Activated T-helper 1 cell treated with anti-CD3 and anti-CD28 coated beads, Interleukin-12 subunit alpha, Interleukin-12 subunit beta, Interleukin-2, Interleukin-4 antibody, amounts not matched to agents 30 ng/mL and 10 ng/mL and 1 ng/mL, durations not matched to agents 14 hours and 24 hours and 36 hours (primary cell): ENCODE measurements at regions of chr14 and their contacts with region 1.

Region 1: DNA sequence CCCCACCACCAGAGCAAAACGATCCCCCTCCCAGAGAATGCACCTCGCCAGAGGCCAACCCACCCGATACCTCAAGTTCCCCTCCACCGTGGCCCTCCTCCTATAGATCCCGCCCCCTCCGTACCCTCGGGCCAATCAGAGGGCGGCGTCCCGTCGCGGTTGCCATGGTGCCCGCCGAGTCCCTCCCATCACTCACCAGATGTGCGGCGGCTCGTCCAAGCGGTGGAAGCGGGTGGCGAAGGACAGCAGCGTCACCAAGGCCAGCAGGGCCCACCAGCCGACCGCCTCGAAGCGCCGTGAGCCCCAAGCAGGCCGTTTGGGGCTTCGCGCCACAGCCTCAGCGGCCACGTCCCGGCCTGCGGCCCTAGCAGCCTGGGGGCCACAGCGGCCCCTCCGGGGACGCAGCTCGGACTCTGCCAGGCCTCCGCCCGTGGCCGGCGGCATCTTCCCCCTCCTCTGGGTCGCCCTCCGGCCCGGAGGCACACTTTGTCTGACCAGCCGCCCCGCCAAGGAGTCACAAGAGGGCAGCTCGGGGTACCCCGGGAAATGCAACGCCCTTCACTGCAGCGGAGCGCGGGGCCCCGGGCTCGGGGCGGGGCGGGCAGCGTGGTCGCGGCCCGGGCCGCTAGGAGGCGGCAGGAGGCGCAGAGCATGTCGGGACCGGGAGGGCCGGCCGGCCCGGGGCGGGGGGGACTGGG is at the start of gene POMT2:
- DNase-seq: peak; percentile 92
- H3K4me3 Mint-ChIP-seq: peak within 1 kb of the TSS; percentile 92
- H3K27ac Mint-ChIP-seq: peak within 1 kb of the TSS; percentile 99
- H3K4me1 Mint-ChIP-seq: peaks cover 22% of the 10 kb centered on the region
- H3K27me3 Mint-ChIP-seq: no peaks in the 10 kb centered on the region
- total RNA-seq, gene POMT2: 20.5 and 22.1 TPM in 2 replicates

Region 2: GRCh38 chr14:77033622-77034521 is 286.5 kb before region 1 on chr14:
- intact Hi-C with region 1: loop called (anchors 2 kb)
- DNase-seq: peak; percentile 80
- H3K4me3 Mint-ChIP-seq: peak overlapping the region; percentile 87
- H3K27ac Mint-ChIP-seq: peak overlapping the region; percentile 98
- H3K4me1 Mint-ChIP-seq: peaks cover 79% of the 10 kb centered on the region
- H3K27me3 Mint-ChIP-seq: no peaks in the 10 kb centered on the region

Region 3: GRCh38 chr14:77339407-77339806 is 19.0 kb after region 1 on chr14:
- intact Hi-C with region 1: no loop called
- DNase-seq: no peak
- H3K4me3 Mint-ChIP-seq: no peak overlapping the region
- H3K27ac Mint-ChIP-seq: no peak overlapping the region
- H3K4me1 Mint-ChIP-seq: peaks cover 18% of the 10 kb centered on the region
- H3K27me3 Mint-ChIP-seq: no peaks in the 10 kb centered on the region

Region 4: DNA sequence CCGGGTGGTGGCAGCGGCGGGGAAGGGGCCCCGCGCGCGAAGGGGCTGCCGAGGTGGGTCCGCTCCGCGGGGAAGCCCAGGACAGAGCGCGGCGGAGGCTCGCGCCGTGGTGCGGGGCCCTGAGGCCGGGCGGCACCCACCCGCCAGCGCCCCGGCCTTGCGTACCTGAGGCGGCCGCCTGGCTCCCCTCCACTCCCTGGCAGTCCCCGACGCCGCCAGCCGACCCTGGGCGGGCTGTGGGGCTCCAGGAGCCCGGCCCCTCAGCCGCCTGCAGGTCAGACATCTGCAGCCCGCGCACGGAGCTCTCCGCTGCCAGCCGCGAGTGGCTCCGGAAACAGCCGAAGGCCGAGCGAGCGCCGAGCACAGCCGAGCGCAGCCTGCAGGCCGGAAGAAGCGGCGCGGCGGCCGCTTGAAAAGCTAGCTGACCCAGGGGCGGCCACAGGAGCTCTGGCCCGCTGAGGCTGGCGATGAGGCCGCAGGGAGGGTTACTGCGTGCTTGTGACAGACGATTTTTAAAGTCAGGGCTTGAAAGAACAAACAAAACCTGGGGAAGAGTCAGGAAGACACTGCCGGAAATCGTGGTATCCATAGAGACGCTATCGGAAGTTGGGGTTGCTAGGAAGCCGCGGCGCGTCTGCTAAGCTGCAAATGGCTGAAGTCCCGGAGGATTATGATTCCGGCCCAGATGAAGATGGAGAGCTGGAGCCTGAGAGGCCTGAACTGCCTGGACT is 56.5 kb after region 1 on chr14 and contains the starts of genes SAMD15 and TMED8:
- intact Hi-C with region 1: loop called (anchors 1 kb)
- DNase-seq: peak; percentile 80
- H3K4me3 Mint-ChIP-seq: peak within 1 kb of the TSS; percentile 92
- H3K27ac Mint-ChIP-seq: peak within 1 kb of the TSS; percentile 89
- H3K4me1 Mint-ChIP-seq: peaks cover 37% of the 10 kb centered on the region
- H3K27me3 Mint-ChIP-seq: peaks cover 10% of the 10 kb centered on the region
- total RNA-seq, gene SAMD15: 0.29 and 1.1 TPM in 2 replicates
- total RNA-seq, gene TMED8: 28.1 and 28.4 TPM in 2 replicates

Region 5: GRCh38 chr14:77616454-77617229 is 296.3 kb after region 1 on chr14 and contains the start of gene SPTLC2:
- intact Hi-C with region 1: loop called (anchors 1 kb)
- DNase-seq: peak; percentile 95
- H3K4me3 Mint-ChIP-seq: peak within 1 kb of the TSS; percentile 95
- H3K27ac Mint-ChIP-seq: peak within 1 kb of the TSS; percentile 96
- H3K4me1 Mint-ChIP-seq: peaks cover 46% of the 10 kb centered on the region
- H3K27me3 Mint-ChIP-seq: peaks cover 2% of the 10 kb centered on the region
- total RNA-seq, gene SPTLC2: 29.9 and 31.9 TPM in 2 replicates

Region 6: DNA sequence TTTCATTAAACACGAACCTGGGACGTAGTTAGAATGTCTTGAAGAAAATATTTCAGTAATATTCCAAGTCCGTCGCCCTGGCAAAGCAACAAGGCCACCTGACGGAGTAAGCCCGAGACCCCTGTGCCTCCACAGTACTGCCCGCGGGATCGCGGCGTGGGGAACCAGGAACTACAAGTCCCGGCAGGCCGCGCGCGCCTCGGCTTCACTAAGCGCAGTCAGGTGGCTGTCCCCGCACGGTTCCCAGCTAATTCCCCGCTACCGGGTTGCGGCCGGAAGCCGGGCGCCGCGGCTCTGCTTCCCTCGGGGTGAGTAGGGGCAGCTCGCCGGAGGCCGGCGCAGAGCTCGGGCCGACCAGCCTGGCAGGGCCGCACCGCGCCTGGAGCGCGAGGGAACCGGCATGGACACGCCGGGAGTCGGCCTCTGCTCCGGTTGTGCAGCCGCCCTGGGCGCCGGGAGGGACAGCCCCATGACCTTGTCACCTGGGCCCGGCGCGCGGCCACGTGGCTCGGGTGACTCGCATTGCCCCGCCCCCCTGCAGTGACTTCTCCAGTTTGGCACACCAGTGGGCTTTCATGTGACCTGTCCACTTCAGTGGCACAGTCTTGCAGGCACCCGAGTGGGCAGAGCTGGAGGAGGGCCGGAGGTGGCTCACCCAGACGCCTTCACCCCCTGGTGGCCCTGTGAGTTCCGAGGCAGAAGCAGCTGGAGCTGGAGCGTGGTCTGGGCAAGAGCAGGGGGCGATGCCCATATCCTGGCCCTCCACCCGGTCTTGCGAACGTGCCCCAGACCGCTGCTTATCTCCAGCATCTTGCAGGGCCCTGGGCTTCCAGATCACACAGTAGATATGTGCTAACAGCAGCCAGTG is 479.7 kb after region 1 on chr14 and contains the start of gene ADCK1:
- intact Hi-C with region 1: loop called (anchors 5 kb)
- DNase-seq: peak; percentile 81
- H3K4me3 Mint-ChIP-seq: peak within 1 kb of the TSS; percentile 88
- H3K27ac Mint-ChIP-seq: peak within 1 kb of the TSS; percentile 80
- H3K4me1 Mint-ChIP-seq: peaks cover 14% of the 10 kb centered on the region
- H3K27me3 Mint-ChIP-seq: peaks cover 5% of the 10 kb centered on the region
- total RNA-seq, gene ADCK1: 3.9 and 5.4 TPM in 2 replicates